MCF 10A (cell line): ENCODE measurements at regions of chr2 and their contacts with region 1.

Region 1: GRCh38 chr2:40448468-40449079 is 3.3 kb downstream of the SLC8A1 start:
- DNase-seq: peak; percentile 54
- H3K4me3 Mint-ChIP-seq: no peak overlapping the region
- H3K27ac Mint-ChIP-seq: no peak overlapping the region
- H3K4me1 Mint-ChIP-seq: peaks cover 17% of the 10 kb centered on the region
- H3K27me3 Mint-ChIP-seq: no peaks in the 10 kb centered on the region
- CTCF ChIP-seq: peak; percentile 45

Region 2: GRCh38 chr2:40212804-40213470 is 235.6 kb before region 1 on chr2:
- CTCF ChIA-PET with region 1: interaction called, 11 read pairs
- POLR2A ChIA-PET with region 1: no interaction called
- intact Hi-C with region 1: no loop called
- DNase-seq: peak; percentile 26
- H3K4me3 Mint-ChIP-seq: no peak overlapping the region
- H3K27ac Mint-ChIP-seq: no peak overlapping the region
- H3K4me1 Mint-ChIP-seq: no peaks in the 10 kb centered on the region
- H3K27me3 Mint-ChIP-seq: no peaks in the 10 kb centered on the region
- CTCF ChIP-seq: peak; percentile 25

Region 3: GRCh38 chr2:40625849-40626248 is 177.3 kb after region 1 on chr2:
- CTCF ChIA-PET with region 1: no interaction called
- POLR2A ChIA-PET with region 1: no interaction called
- intact Hi-C with region 1: no loop called
- DNase-seq: peak; percentile 57
- H3K4me3 Mint-ChIP-seq: no peak overlapping the region
- H3K27ac Mint-ChIP-seq: peak overlapping the region; percentile 84
- H3K4me1 Mint-ChIP-seq: peaks cover 6% of the 10 kb centered on the region
- H3K27me3 Mint-ChIP-seq: no peaks in the 10 kb centered on the region
- CTCF ChIP-seq: no peak

Region 4: GRCh38 chr2:40760071-40760666 is 311.6 kb after region 1 on chr2:
- CTCF ChIA-PET with region 1: no interaction called
- POLR2A ChIA-PET with region 1: no interaction called
- intact Hi-C with region 1: loop called (anchors 2 kb)
- DNase-seq: peak; percentile 64
- H3K4me3 Mint-ChIP-seq: no peak overlapping the region
- H3K27ac Mint-ChIP-seq: no peak overlapping the region
- H3K4me1 Mint-ChIP-seq: no peaks in the 10 kb centered on the region
- H3K27me3 Mint-ChIP-seq: no peaks in the 10 kb centered on the region
- CTCF ChIP-seq: peak; percentile 87